Naive thymus-derived CD4-positive, alpha-beta T cell (primary cell): ENCODE measurements at regions of chr11 and their contacts with region 1.

Region 1: GRCh38 chr11:118878163-118878563 is 5.5 kb upstream of the CXCR5 start:
- DNase-seq: peak in 7 of 9 donors; percentile 36 to 65 (median 59)
- ATAC-seq: peak; percentile 28
- H3K4me3 ChIP-seq: peak overlapping the region; percentile 26
- H3K4me3 Mint-ChIP-seq: peak overlapping the region in 9 of 10 donors; percentile 40 to 86 (median 68)
- H3K27ac ChIP-seq: peak overlapping the region; percentile 80
- H3K27ac Mint-ChIP-seq: peak overlapping the region; percentile 95 to 100 (median 99)
- H3K4me1 ChIP-seq: peaks cover 63 to 81% of the 10 kb centered on the region in 2 donors
- H3K4me1 Mint-ChIP-seq: peaks cover 65 to 98% (median 92%) of the 10 kb centered on the region in 7 donors
- H3K27me3 ChIP-seq: no peaks in the 10 kb centered on the region
- H3K27me3 Mint-ChIP-seq: no peaks in the 10 kb centered on the region

Region 2: DNA sequence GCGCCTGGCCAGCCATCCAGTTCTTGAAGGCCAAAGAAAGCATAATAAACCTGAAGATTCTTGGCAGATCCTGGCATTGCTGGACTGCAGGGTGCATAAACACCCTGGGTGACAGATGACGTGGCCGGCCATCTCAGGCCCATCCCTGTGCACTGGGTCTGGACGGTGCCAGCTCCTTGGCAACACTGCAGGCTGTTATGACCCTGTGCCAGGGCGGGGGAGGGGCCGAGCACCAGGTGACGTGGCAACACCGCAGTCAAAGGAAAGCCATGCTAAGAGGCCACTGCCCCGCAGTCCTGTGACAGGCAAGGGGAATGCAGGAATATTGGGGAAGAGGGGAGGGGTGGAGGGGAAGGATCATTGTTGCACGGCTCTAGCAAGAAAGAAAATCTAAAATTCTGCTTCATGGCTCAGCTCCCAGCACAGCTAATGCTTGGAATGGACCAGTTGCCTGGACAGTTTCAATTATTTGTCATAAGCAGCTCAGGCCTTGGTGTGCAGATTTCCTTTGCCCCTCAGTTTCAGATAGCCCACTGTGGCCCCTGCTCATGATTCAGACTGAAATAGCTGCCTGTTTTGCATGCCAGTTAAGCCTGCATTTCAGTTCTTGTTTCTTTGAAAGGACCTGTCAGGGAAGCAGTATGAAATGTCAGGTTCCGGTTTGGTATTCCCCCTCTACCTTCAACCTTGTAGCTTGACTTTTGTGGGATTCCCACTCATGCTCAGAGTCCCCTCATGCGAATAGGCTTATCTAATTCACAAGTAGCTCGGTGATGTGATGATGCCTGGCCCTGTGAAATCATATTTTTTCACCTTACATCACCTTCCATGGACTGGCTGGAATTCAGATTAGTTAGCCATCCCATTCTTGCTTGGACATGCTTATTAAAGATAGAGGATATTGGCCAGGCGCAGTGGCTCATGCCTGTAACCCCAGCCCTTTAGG is 57.5 kb before region 1 on chr11:
- CTCF ChIA-PET with region 1: no interaction called
- POLR2A ChIA-PET with region 1: no interaction called
- intact Hi-C with region 1: no loop called
- DNase-seq: no peak
- ATAC-seq: peak; percentile 55
- H3K4me3 ChIP-seq: no peak overlapping the region
- H3K4me3 Mint-ChIP-seq: peak overlapping the region in 2 of 10 donors; percentile 9 to 13
- H3K27ac ChIP-seq: no peak overlapping the region
- H3K27ac Mint-ChIP-seq: peak overlapping the region in 1 of 9 donors; percentile 25
- H3K4me1 ChIP-seq: no peaks in the 10 kb centered on the region
- H3K4me1 Mint-ChIP-seq: peaks cover 0 to 4% (median 0%) of the 10 kb centered on the region in 7 donors
- H3K27me3 ChIP-seq: no peaks in the 10 kb centered on the region
- H3K27me3 Mint-ChIP-seq: no peaks in the 10 kb centered on the region

Region 3: GRCh38 chr11:118841469-118842242 is 36.5 kb before region 1 on chr11:
- CTCF ChIA-PET with region 1: no interaction called
- POLR2A ChIA-PET with region 1: interaction called, 3 read pairs
- intact Hi-C with region 1: loop called in 1 of 2 experiments (anchors 2 kb)
- DNase-seq: peak in 1 of 9 donors; percentile 35
- ATAC-seq: peak; percentile 77
- H3K4me3 ChIP-seq: peak overlapping the region; percentile 14
- H3K4me3 Mint-ChIP-seq: peak overlapping the region in 6 of 10 donors; percentile 12 to 58 (median 38)
- H3K27ac ChIP-seq: no peak overlapping the region
- H3K27ac Mint-ChIP-seq: peak overlapping the region in 8 of 9 donors; percentile 29 to 81 (median 61)
- H3K4me1 ChIP-seq: peaks cover 0 to 4% of the 10 kb centered on the region in 2 donors
- H3K4me1 Mint-ChIP-seq: peaks cover 11 to 30% (median 22%) of the 10 kb centered on the region in 7 donors
- H3K27me3 ChIP-seq: no peaks in the 10 kb centered on the region
- H3K27me3 Mint-ChIP-seq: no peaks in the 10 kb centered on the region

Region 4: GRCh38 chr11:118856314-118856713 is 21.8 kb before region 1 on chr11:
- CTCF ChIA-PET with region 1: no interaction called
- POLR2A ChIA-PET with region 1: interaction called, 11 read pairs
- intact Hi-C with region 1: no loop called
- DNase-seq: no peak
- ATAC-seq: no peak
- H3K4me3 ChIP-seq: no peak overlapping the region
- H3K4me3 Mint-ChIP-seq: no peak overlapping the region
- H3K27ac ChIP-seq: no peak overlapping the region
- H3K27ac Mint-ChIP-seq: no peak overlapping the region
- H3K4me1 ChIP-seq: no peaks in the 10 kb centered on the region
- H3K4me1 Mint-ChIP-seq: peaks cover 3 to 27% (median 21%) of the 10 kb centered on the region in 7 donors
- H3K27me3 ChIP-seq: no peaks in the 10 kb centered on the region
- H3K27me3 Mint-ChIP-seq: no peaks in the 10 kb centered on the region

Region 5: DNA sequence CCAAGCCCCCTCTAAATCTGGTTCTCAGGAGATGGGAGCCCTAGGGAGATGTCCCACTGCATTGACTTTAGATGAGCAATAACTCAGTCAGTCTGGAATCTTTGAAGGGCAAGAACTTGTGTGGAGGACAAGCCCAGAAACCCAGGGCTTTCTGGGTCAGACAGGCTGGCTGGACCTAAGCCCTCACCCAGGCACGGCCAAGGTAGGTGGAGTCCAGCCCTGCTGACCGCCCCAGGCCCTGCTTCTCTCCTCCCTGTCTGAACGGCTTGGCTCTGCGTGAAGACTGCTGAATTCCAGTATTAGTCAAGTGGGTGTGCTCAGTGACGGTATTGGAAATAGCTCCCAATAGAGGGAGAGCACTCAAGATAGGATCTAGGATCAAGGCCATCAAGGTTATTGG is 11.6 kb after region 1 on chr11:
- CTCF ChIA-PET with region 1: interaction called, 33 read pairs
- POLR2A ChIA-PET with region 1: no interaction called
- intact Hi-C with region 1: loop called (anchors 1 kb)
- DNase-seq: no peak
- ATAC-seq: no peak
- H3K4me3 ChIP-seq: no peak overlapping the region
- H3K4me3 Mint-ChIP-seq: peak overlapping the region in 5 of 10 donors; percentile 8 to 82 (median 59)
- H3K27ac ChIP-seq: no peak overlapping the region
- H3K27ac Mint-ChIP-seq: peak overlapping the region in 6 of 9 donors; percentile 52 to 98 (median 96)
- H3K4me1 ChIP-seq: peaks cover 58 to 71% of the 10 kb centered on the region in 2 donors
- H3K4me1 Mint-ChIP-seq: peaks cover 53 to 92% (median 83%) of the 10 kb centered on the region in 7 donors
- H3K27me3 ChIP-seq: no peaks in the 10 kb centered on the region
- H3K27me3 Mint-ChIP-seq: no peaks in the 10 kb centered on the region

Region 6: DNA sequence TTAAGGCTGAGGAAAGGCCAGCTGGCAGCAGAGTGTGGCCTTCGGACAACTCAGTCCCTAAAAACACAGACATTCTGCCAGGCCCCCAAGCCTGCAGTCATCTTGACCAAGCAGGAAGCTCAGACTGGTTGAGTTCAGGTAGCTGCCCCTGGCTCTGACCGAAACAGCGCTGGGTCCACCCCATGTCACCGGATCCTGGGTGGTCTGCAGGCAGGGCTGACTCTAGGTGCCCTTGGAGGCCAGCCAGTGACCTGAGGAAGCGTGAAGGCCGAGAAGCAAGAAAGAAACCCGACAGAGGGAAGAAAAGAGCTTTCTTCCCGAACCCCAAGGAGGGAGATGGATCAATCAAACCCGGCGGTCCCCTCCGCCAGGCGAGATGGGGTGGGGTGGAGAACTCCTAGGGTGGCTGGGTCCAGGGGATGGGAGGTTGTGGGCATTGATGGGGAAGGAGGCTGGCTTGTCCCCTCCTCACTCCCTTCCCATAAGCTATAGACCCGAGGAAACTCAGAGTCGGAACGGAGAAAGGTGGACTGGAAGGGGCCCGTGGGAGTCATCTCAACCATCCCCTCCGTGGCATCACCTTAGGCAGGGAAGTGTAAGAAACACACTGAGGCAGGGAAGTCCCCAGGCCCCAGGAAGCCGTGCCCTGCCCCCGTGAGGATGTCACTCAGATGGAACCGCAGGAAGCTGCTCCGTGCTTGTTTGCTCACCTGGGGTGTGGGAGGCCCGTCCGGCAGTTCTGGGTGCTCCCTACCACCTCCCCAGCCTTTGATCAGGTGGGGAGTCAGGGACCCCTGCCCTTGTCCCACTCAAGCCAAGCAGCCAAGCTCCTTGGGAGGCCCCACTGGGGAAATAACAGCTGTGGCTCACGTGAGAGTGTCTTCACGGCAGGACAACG is 17.2 kb after region 1 on chr11:
- CTCF ChIA-PET with region 1: interaction called, 33 read pairs
- POLR2A ChIA-PET with region 1: no interaction called
- intact Hi-C with region 1: loop called (anchors 1 kb)
- DNase-seq: peak; percentile 54 to 87 (median 81)
- ATAC-seq: peak; percentile 86
- H3K4me3 ChIP-seq: peak overlapping the region; percentile 22
- H3K4me3 Mint-ChIP-seq: peak overlapping the region; percentile 76 to 86 (median 81)
- H3K27ac ChIP-seq: peak overlapping the region; percentile 94
- H3K27ac Mint-ChIP-seq: peak overlapping the region; percentile 94 to 99 (median 97)
- H3K4me1 ChIP-seq: peaks cover 64 to 67% of the 10 kb centered on the region in 2 donors
- H3K4me1 Mint-ChIP-seq: peaks cover 59 to 78% (median 71%) of the 10 kb centered on the region in 7 donors
- H3K27me3 ChIP-seq: no peaks in the 10 kb centered on the region
- H3K27me3 Mint-ChIP-seq: no peaks in the 10 kb centered on the region